B cell (primary cell): ENCODE measurements at regions of chr13 and their contacts with region 1.

Region 1: DNA sequence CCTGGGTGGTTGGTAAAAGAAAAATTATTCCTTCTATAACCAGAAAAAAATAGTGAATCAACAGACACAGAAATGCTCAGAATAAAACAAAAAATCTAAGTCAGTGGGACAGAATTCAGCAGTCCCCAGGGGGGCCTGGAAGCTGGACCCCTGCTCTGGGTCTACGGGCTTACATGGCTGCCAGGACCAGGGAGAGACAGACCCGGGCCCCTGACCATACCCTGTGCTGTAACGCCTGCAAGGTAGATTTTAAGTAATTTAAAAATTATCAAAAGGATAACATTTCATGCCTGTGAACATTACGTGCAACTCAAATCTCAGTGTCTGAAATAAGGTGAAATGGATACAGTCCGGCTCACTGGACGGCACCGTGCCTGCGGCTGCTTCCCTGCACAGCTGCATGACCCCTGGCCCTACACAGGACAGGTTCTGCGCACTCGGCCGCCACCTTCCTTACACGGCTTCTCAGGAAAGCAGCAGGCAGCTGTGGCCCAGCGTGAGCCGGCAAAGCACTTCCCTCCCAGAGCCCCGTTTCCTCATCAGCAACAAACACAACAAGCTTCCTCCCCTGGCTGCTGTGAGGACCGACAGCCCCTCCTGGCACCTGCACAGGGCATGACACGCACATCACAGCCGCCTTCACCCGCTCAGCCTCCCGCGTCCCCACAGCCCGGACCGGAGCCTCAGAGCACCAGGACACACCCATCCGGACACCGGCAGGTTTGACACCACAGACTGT is 22.2 kb downstream of the RASA3 start:
- DNase-seq: peak; percentile 85
- ATAC-seq: peak; percentile 94
- H3K4me3 ChIP-seq: peak overlapping the region in 1 of 5 experiments; percentile 29
- H3K4me3 Mint-ChIP-seq: peak overlapping the region; percentile 85
- H3K27ac ChIP-seq: peak overlapping the region; percentile 38 to 60
- H3K27ac Mint-ChIP-seq: peak overlapping the region; percentile 95
- H3K4me1 ChIP-seq: peaks cover 35 to 43% of the 10 kb centered on the region in 2 donors
- H3K4me1 Mint-ChIP-seq: peaks cover 47% of the 10 kb centered on the region
- H3K27me3 ChIP-seq: no peaks in the 10 kb centered on the region
- H3K27me3 Mint-ChIP-seq: no peaks in the 10 kb centered on the region
- CTCF ChIP-seq: peak; percentile 58

Region 2: GRCh38 chr13:113951246-113951999 is 158.8 kb before region 1 on chr13:
- CTCF ChIA-PET with region 1: interaction called, 4 read pairs
- POLR2A ChIA-PET with region 1: no interaction called
- intact Hi-C with region 1: loop called (anchors 1 kb)
- DNase-seq: peak; percentile 77
- ATAC-seq: peak; percentile 95
- H3K4me3 ChIP-seq: peak overlapping the region in 2 of 5 experiments; percentile 26 to 43
- H3K4me3 Mint-ChIP-seq: peak overlapping the region; percentile 39
- H3K27ac ChIP-seq: no peak overlapping the region
- H3K27ac Mint-ChIP-seq: no peak overlapping the region
- H3K4me1 ChIP-seq: peaks cover 7 to 23% of the 10 kb centered on the region in 2 donors
- H3K4me1 Mint-ChIP-seq: peaks cover 17% of the 10 kb centered on the region
- H3K27me3 ChIP-seq: peaks cover 0 to 12% (median 0%) of the 10 kb centered on the region in 4 experiments
- H3K27me3 Mint-ChIP-seq: no peaks in the 10 kb centered on the region
- CTCF ChIP-seq: peak; percentile 70

Region 3: GRCh38 chr13:114047358-114047881 is 62.8 kb before region 1 on chr13:
- CTCF ChIA-PET with region 1: interaction called, 8 read pairs
- POLR2A ChIA-PET with region 1: interaction called, 5 read pairs
- intact Hi-C with region 1: loop called (anchors 5 kb)
- DNase-seq: no peak
- ATAC-seq: peak; percentile 31
- H3K4me3 ChIP-seq: peak overlapping the region in 2 of 5 experiments; percentile 7 to 27
- H3K4me3 Mint-ChIP-seq: peak overlapping the region; percentile 73
- H3K27ac ChIP-seq: peak overlapping the region in 1 of 2 donors; percentile 26
- H3K27ac Mint-ChIP-seq: peak overlapping the region; percentile 89
- H3K4me1 ChIP-seq: peaks cover 41 to 70% of the 10 kb centered on the region in 2 donors
- H3K4me1 Mint-ChIP-seq: peaks cover 71% of the 10 kb centered on the region
- H3K27me3 ChIP-seq: no peaks in the 10 kb centered on the region
- H3K27me3 Mint-ChIP-seq: no peaks in the 10 kb centered on the region
- CTCF ChIP-seq: no peak

Region 4: GRCh38 chr13:114065141-114065925 is 44.9 kb before region 1 on chr13:
- CTCF ChIA-PET with region 1: interaction called, 14 read pairs
- POLR2A ChIA-PET with region 1: interaction called, 8 read pairs
- intact Hi-C with region 1: loop called (anchors 1 kb)
- DNase-seq: peak; percentile 66
- ATAC-seq: peak; percentile 77
- H3K4me3 ChIP-seq: peak overlapping the region; percentile 19 to 68 (median 52)
- H3K4me3 Mint-ChIP-seq: peak overlapping the region; percentile 89
- H3K27ac ChIP-seq: peak overlapping the region; percentile 34 to 87
- H3K27ac Mint-ChIP-seq: peak overlapping the region; percentile 93
- H3K4me1 ChIP-seq: peaks cover 56 to 64% of the 10 kb centered on the region in 2 donors
- H3K4me1 Mint-ChIP-seq: peaks cover 63% of the 10 kb centered on the region
- H3K27me3 ChIP-seq: no peaks in the 10 kb centered on the region
- H3K27me3 Mint-ChIP-seq: no peaks in the 10 kb centered on the region
- CTCF ChIP-seq: no peak

Region 5: GRCh38 chr13:114132419-114133121 is 22.3 kb after region 1 on chr13 and contains the start of gene RASA3:
- CTCF ChIA-PET with region 1: interaction called, 13 read pairs
- POLR2A ChIA-PET with region 1: interaction called, 7 read pairs
- intact Hi-C with region 1: loop called (anchors 1 kb)
- DNase-seq: peak; percentile 74
- ATAC-seq: peak; percentile 69
- H3K4me3 ChIP-seq: peak within 1 kb of the TSS; percentile 82 to 95 (median 86)
- H3K4me3 Mint-ChIP-seq: peak within 1 kb of the TSS; percentile 100
- H3K27ac ChIP-seq: peak within 1 kb of the TSS; percentile 39 to 90
- H3K27ac Mint-ChIP-seq: peak within 1 kb of the TSS; percentile 87
- H3K4me1 ChIP-seq: peaks cover 44 to 49% of the 10 kb centered on the region in 2 donors
- H3K4me1 Mint-ChIP-seq: peaks cover 58% of the 10 kb centered on the region
- H3K27me3 ChIP-seq: no peaks in the 10 kb centered on the region
- H3K27me3 Mint-ChIP-seq: no peaks in the 10 kb centered on the region
- CTCF ChIP-seq: no peak
- total RNA-seq, gene RASA3: 87.4 and 88.8 TPM in 2 replicates

Region 6: DNA sequence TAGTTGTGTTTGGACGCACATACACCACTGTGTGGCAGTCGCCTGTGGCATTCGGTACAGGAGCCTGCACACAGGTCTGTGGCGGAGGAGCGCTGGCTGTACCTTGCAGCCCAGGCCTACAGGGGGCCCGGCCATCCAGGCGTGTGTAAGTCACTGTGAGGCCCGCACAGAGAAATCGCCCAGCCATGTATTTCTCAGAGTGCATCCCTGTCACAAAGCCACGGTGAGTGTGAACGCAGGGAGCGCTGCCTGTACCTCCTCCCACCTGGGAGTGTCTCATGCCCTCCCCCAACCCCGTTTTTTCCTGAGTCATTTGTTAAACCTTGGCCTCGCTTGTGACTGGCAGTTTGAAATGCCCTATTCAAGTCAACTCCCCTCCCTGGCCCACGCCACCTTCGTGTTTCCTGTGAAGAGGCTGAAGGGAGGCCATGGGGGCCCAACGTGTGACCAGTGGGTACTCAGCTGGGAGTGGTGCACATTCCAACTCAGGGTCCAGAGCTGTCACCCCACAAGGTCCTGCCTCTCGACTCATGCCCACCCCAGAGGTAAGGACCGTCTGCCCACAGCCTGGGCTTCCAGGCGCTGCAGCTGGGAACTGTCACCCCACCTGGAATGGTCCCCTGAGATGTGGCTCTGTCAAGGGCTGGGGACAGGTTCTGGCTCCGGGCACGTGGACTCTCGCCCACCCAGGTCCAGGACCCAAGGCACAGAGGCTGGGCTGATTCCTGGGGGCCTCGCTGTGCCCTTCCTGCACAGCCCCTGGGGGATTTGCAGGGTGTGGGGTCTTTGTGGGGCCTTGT is 33.7 kb after region 1 on chr13:
- CTCF ChIA-PET with region 1: interaction called, 8 read pairs
- POLR2A ChIA-PET with region 1: no interaction called
- intact Hi-C with region 1: loop called (anchors 2 kb)
- DNase-seq: peak; percentile 76
- ATAC-seq: peak; percentile 42
- H3K4me3 ChIP-seq: peak overlapping the region in 1 of 5 experiments; percentile 0
- H3K4me3 Mint-ChIP-seq: no peak overlapping the region
- H3K27ac ChIP-seq: peak overlapping the region; percentile 48 to 84
- H3K27ac Mint-ChIP-seq: no peak overlapping the region
- H3K4me1 ChIP-seq: peaks cover 88 to 93% of the 10 kb centered on the region in 2 donors
- H3K4me1 Mint-ChIP-seq: peaks cover 12% of the 10 kb centered on the region
- H3K27me3 ChIP-seq: no peaks in the 10 kb centered on the region
- H3K27me3 Mint-ChIP-seq: no peaks in the 10 kb centered on the region
- CTCF ChIP-seq: peak; percentile 68

Region 7: DNA sequence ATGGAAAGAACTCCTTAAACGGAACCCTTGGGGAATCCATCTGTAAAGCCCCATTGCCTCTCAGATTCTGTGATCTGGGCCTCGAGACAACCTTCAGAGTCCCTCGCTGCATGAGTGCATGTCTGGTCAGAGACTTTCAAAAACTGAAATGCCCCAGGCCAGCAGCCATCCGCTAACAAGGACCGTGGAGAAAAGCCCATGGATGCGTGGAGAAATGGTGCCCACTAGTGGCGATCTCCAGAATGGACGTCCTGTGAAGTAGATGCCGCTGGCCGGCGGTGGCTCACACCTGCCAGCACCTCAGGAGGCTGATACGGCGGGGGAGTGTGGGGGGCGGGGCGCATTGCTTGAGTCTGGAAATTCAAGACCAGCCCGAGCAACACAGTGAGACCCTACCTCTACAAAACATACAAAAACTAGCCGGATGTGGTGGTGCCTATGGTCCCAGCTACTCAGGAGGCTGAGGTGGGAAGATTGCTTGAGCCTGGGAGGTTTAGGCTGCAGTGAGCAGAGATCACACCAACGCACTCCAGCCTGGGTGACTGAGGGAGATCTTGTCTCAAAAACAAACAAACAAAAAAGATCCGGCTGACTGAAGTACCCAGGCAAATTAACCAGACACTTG is 116.6 kb after region 1 on chr13:
- CTCF ChIA-PET with region 1: interaction called, 38 read pairs
- POLR2A ChIA-PET with region 1: no interaction called
- intact Hi-C with region 1: loop called (anchors 1 kb)
- DNase-seq: peak; percentile 87
- ATAC-seq: peak; percentile 93
- H3K4me3 ChIP-seq: no peak overlapping the region
- H3K4me3 Mint-ChIP-seq: no peak overlapping the region
- H3K27ac ChIP-seq: no peak overlapping the region
- H3K27ac Mint-ChIP-seq: peak overlapping the region; percentile 41
- H3K4me1 ChIP-seq: peaks cover 16 to 20% of the 10 kb centered on the region in 2 donors
- H3K4me1 Mint-ChIP-seq: peaks cover 20% of the 10 kb centered on the region
- H3K27me3 ChIP-seq: peaks cover 0 to 17% (median 12%) of the 10 kb centered on the region in 4 experiments
- H3K27me3 Mint-ChIP-seq: peaks cover 19% of the 10 kb centered on the region
- CTCF ChIP-seq: peak; percentile 89